PC-9 (cell line): ENCODE measurements at regions of chr15 and their contacts with region 1.

Region 1: DNA sequence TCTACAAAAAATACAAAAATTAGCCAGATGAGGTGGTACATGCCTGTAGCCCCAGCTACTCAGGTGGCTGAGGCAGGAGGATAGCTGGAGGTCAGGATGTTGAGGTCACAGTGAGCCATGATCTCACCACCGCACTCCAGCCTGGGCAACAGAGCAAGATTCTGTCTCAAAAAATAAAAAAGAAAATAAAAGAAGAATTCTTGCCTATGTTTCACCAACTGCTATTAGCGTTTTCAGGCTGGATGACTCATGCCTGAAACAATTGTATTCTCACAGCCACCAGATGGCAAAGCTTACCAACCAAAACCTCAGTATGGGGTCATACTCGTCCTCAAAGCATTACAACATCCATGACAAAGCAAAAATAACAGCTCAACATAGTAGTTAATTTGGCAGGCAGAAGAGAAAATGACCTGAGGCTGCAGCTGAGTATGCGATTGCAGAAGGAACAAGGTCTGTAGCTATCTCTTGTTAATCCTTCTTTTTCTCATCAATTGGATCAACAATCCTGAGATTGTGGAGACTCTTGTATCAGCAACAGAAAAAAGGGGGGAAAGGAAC is 52.2 kb downstream of the TP53BP1 start:
- DNase-seq: peak; percentile 55 to 90
- H3K4me3 ChIP-seq: no peak overlapping the region
- H3K27ac ChIP-seq: peak overlapping the region; percentile 74
- H3K4me1 ChIP-seq: peaks cover 4% of the 10 kb centered on the region
- H3K27me3 ChIP-seq: no peaks in the 10 kb centered on the region
- CTCF ChIP-seq: peak; percentile 55

Region 2: DNA sequence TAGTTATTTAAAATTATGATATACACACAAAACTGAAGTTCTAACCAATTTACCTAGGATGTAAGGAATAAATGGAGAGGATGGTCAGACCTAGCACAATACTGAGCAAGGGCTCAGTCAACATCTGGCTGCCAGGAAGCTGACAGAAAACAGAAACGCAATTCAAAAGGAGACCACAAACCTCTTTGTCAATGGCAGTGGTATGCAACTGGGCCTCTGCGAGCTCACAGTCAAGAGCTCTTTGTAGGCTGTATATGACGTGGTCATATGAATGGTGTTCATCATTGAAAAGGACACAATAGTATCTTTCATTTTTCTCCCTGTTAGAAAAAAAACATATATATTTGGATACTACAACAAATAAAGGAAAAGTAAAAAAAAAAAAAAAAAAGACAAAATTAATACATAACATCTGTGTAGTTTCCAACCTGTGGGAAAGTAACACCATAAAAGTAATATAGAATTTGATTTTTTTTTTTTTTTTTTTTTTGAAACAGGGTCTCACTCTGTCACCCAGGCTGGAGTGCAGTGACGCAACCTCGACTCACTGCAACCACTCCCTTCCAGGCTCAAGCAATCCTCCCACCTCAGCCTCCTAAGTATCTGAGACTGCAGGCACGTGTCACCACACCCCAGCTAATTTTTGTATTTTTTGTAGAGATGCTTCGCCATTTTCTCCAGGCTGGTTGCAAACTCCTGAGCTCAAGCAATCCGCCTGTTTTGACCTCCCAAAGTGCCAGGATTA is 372.9 kb before region 1 on chr15:
- CTCF ChIA-PET with region 1: no interaction called
- POLR2A ChIA-PET with region 1: interaction called, 32 read pairs
- intact Hi-C with region 1: no loop called
- DNase-seq: no peak
- H3K4me3 ChIP-seq: no peak overlapping the region
- H3K27ac ChIP-seq: no peak overlapping the region
- H3K4me1 ChIP-seq: no peaks in the 10 kb centered on the region
- H3K27me3 ChIP-seq: no peaks in the 10 kb centered on the region
- CTCF ChIP-seq: no peak

Region 3: DNA sequence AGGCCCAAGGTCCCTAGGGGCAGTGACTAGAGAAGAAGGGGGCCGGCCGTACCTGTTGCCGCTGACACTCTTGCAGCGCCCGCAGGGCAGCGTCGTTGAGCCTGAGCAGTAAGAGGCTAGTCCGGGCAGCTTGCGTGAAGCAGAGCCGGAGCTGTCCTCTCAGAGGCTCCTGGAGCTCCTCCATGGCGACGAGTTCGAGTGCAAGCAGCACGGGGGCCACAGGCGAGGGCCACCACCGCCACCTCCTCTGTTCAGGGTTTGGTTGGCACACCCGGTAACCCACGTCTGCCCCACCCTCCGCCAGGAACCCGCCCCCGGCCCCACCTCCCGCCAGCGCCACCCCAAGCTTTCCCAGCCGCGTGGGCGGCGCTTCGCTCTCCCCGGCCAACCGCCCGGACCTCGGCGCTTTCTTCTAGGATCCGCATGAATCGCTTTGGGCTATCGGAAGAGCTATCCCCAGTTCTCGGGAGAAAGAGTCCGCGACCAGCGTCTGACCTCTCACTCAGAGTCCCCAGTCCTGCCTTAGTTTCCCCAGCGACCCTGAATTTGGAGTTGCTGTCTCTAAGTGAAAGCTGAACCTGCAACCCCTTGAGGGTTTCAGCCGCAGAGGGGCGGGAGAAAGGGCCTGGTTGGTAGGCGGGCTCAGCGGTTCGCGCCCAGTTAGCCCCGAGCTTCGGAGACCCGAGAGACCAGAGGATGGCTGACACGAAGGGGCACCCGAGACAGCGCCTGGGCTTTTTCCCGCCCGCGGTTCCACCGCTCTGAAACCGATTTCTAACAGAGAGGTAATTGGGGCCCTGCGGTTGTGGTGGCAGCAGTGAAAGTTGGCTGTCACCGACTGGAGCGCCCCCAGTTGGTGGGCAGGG is 336.1 kb after region 1 on chr15 and contains the start of gene ELL3:
- CTCF ChIA-PET with region 1: interaction called, 10 read pairs
- POLR2A ChIA-PET with region 1: interaction called, 8 read pairs
- intact Hi-C with region 1: loop called (anchors 2 kb)
- DNase-seq: peak; percentile 57 to 77
- H3K4me3 ChIP-seq: peak within 1 kb of the TSS; percentile 86
- H3K27ac ChIP-seq: peak within 1 kb of the TSS; percentile 45; the same call in 1 of the 2 replicates
- H3K4me1 ChIP-seq: no peaks in the 10 kb centered on the region
- H3K27me3 ChIP-seq: no peaks in the 10 kb centered on the region
- CTCF ChIP-seq: peak; percentile 77
- total RNA-seq, gene ELL3: 6.1 and 7.0 TPM in 2 replicates

Region 4: GRCh38 chr15:44261007-44261706 is 820.4 kb after region 1 on chr15:
- CTCF ChIA-PET with region 1: interaction called, 11 read pairs
- POLR2A ChIA-PET with region 1: no interaction called
- intact Hi-C with region 1: no loop called
- DNase-seq: no peak
- H3K4me3 ChIP-seq: no peak overlapping the region
- H3K27ac ChIP-seq: no peak overlapping the region
- H3K4me1 ChIP-seq: no peaks in the 10 kb centered on the region
- H3K27me3 ChIP-seq: no peaks in the 10 kb centered on the region
- CTCF ChIP-seq: no peak